AG04450 (cell line): ENCODE measurements at regions of chr7 and their contacts with region 1.

Region 1: DNA sequence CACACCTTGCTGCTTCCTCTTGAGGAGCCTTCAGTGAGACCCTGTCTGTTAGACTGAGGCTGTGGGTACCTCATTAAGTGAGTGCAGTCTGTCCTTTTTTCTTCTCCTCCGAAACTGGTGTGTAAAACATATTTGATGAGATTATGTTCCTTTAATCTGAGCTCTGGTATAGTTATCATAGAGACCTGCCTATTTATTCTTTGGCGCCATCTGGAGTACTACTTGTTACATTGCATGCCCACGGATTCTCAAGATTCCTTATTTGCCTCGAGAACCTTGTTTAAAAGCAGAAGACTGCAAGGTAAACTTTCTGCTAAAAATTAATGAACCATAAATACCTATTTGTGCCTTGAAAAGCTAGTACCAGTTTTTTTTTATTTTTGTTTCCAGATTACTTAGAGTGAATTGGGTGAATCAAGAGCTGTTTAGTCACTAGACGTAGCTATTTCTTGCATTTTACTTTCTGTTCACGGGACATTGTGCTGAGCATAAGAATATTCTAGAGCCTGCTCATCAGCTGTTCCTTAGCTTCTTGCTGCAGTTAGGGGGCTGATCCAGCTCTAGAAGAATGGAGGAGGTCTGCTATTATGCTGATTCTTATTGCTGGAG is 16.9 kb upstream of the STMP1 start:
- DNase-seq: no peak
- H3K4me3 ChIP-seq: no peak overlapping the region
- H3K27ac ChIP-seq: no peak overlapping the region
- H3K27me3 ChIP-seq: no peaks in the 10 kb centered on the region
- CTCF ChIP-seq: peak; percentile 75

Region 2: GRCh38 chr7:135281363-135281949 is 363.9 kb before region 1 on chr7:
- CTCF ChIA-PET with region 1: interaction called, 146 read pairs
- POLR2A ChIA-PET with region 1: no interaction called
- DNase-seq: peak; percentile 75
- H3K4me3 ChIP-seq: no peak overlapping the region
- H3K27ac ChIP-seq: no peak overlapping the region
- H3K27me3 ChIP-seq: peaks cover 5% of the 10 kb centered on the region
- CTCF ChIP-seq: peak; percentile 99

Region 3: GRCh38 chr7:135602304-135602703 is 43.1 kb before region 1 on chr7:
- CTCF ChIA-PET with region 1: interaction called, 18 read pairs
- POLR2A ChIA-PET with region 1: no interaction called
- DNase-seq: no peak
- H3K4me3 ChIP-seq: no peak overlapping the region
- H3K27ac ChIP-seq: no peak overlapping the region
- H3K27me3 ChIP-seq: no peaks in the 10 kb centered on the region
- CTCF ChIP-seq: no peak

Region 4: GRCh38 chr7:135620980-135621850 is 24.2 kb before region 1 on chr7:
- CTCF ChIA-PET with region 1: interaction called, 136 read pairs
- POLR2A ChIA-PET with region 1: no interaction called
- DNase-seq: peak; percentile 75
- H3K4me3 ChIP-seq: no peak overlapping the region
- H3K27ac ChIP-seq: no peak overlapping the region
- H3K27me3 ChIP-seq: no peaks in the 10 kb centered on the region
- CTCF ChIP-seq: peak; percentile 89

Region 5: GRCh38 chr7:135662373-135663114 is 17.1 kb after region 1 on chr7 and contains the start of gene STMP1:
- CTCF ChIA-PET with region 1: interaction called, 83 read pairs
- POLR2A ChIA-PET with region 1: interaction called, 7 read pairs
- DNase-seq: peak; percentile 86
- H3K4me3 ChIP-seq: peak within 1 kb of the TSS; percentile 93
- H3K27ac ChIP-seq: peak within 1 kb of the TSS; percentile 98
- H3K27me3 ChIP-seq: no peaks in the 10 kb centered on the region
- CTCF ChIP-seq: peak; percentile 70
- polyA plus RNA-seq, gene STMP1: 39.3 and 48.2 TPM in 2 replicates

Region 6: DNA sequence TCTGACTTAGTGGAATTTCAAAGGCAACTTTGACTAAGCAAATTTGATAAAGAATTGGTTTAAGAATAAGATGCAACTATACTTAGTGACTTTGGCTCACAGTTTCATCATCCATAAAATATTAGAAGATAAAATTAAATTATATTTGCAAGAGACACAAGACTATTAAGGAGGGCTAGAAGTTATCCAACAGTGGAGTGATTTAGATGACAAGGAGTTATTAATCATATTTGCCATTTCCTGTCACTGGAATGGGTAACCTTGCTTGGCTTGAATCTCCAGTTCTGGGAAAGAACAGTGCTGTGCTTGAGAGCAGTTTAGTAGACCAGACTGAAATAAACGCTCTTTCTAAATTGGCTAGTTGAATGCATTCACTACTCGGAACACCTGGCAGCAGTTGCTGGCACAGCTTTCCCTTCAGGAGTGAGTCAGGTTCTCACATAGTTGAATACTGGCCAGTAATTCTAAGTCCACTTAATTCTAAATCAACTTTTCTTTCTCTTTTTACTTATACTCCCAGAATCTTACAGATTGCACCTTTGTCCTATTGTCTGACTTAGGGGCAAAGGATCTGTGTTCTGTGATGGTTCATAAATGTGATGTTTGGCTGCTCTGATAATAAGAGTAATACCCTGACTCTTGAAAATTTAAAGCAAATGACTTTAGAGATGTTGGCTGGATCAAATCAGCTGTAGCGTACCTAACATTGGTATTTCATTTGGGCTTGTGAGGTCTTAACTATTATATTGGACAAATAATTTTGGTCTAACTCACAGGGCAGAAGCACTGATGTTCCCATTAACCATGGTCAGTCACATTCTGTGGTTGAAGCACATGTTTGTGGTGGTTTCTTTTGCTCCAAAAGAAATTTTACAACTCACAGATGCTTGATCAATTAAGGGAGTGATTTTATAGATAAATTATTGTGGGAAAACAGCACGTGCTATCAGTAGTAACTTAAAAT is 33.5 kb after region 1 on chr7:
- CTCF ChIA-PET with region 1: interaction called, 35 read pairs
- POLR2A ChIA-PET with region 1: no interaction called
- DNase-seq: no peak
- H3K4me3 ChIP-seq: no peak overlapping the region
- H3K27ac ChIP-seq: no peak overlapping the region
- H3K27me3 ChIP-seq: no peaks in the 10 kb centered on the region
- CTCF ChIP-seq: no peak